CD4-positive, alpha-beta T cell (primary cell): ENCODE measurements at regions of chr22 and their contacts with region 1.

Region 1: DNA sequence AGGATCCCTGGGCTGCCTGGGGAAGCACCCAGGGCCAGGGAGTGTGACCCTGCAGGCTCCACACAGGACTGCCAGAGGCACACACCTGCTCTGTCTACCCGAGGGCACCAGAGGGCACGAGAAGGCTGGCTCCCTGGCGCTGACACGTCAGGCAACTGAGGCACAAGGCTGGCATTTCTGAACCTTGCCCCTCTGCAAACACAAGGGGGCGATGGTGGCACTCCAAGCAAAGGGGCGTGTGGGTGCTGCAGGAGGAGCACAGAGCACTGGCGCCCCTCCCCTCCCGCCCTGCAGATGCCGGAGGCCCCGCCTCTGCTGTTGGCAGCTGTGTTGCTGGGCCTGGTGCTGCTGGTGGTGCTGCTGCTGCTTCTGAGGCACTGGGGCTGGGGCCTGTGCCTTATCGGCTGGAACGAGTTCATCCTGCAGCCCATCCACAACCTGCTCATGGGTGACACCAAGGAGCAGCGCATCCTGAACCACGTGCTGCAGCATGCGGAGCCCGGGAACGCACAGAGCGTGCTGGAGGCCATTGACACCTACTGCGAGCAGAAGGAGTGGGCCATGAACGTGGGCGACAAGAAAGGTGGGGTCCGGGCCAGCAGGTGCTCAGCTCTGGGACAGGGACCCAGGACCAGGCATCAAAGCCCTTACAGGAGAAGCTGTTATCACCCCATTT is 20.8 kb upstream of the TXNRD2 start:
- DNase-seq: peak; percentile 26 to 72 (median 52)
- ATAC-seq: peak; percentile 87
- H3K4me3 ChIP-seq: no peak overlapping the region
- H3K4me3 Mint-ChIP-seq: no peak overlapping the region
- H3K27ac ChIP-seq: no peak overlapping the region
- H3K27ac Mint-ChIP-seq: no peak overlapping the region
- H3K4me1 ChIP-seq: peaks cover 7% of the 10 kb centered on the region
- H3K4me1 Mint-ChIP-seq: no peaks in the 10 kb centered on the region
- H3K27me3 ChIP-seq: no peaks in the 10 kb centered on the region
- H3K27me3 Mint-ChIP-seq: no peaks in the 10 kb centered on the region
- CTCF ChIP-seq: no peak

Region 2: DNA sequence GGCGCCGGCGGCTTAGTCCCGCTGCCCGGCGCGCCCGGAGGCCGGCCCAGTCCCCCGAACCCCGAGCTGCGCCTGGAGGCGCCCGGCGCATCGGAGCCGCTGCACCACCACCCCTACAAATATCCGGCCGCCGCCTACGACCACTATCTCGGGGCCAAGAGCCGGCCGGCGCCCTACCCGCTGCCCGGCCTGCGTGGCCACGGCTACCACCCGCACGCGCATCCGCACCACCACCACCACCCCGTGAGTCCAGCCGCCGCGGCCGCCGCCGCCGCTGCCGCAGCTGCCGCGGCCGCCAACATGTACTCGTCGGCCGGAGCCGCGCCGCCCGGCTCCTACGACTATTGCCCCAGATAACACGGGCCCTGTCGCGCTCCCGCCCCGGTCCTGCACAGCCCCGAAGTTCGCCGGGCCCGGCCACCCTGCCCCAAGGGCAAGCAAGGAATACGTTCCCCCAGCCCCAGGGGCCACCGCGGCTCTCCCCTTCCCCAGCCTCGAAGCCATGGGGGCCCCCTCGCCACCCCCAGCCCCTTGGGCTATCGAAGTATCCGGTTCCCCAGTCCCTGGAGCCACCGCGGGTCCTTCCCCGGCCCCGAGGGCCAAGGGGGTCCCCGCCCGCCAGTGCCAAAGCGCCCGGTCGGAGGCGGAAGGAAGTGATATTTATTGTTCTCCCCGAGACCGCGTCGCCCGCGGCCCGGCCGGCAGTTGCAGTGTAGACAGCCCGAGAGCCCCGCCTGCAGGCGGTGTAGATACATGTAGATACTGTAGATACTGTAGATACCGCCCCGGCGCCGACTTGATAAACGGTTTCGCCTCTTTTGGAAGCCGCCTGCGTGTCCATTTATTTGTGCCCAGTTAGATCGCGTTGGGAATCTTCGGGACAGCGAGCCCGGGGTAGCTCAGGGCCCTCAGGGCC is 195.6 kb before region 1 on chr22:
- CTCF ChIA-PET with region 1: no interaction called
- POLR2A ChIA-PET with region 1: no interaction called
- intact Hi-C with region 1: no loop called
- DNase-seq: peak in 12 of 14 experiments; percentile 12 to 70 (median 38)
- ATAC-seq: peak; percentile 76
- H3K4me3 ChIP-seq: peak overlapping the region; percentile 10
- H3K4me3 Mint-ChIP-seq: peak overlapping the region; percentile 62
- H3K27ac ChIP-seq: no peak overlapping the region
- H3K27ac Mint-ChIP-seq: no peak overlapping the region
- H3K4me1 ChIP-seq: peaks cover 22% of the 10 kb centered on the region
- H3K4me1 Mint-ChIP-seq: peaks cover 13% of the 10 kb centered on the region
- H3K27me3 ChIP-seq: peaks cover 83 to 84% of the 10 kb centered on the region in 2 experiments
- H3K27me3 Mint-ChIP-seq: peaks cover 80% of the 10 kb centered on the region
- CTCF ChIP-seq: no peak

Region 3: GRCh38 chr22:19886601-19887255 is 75.6 kb before region 1 on chr22:
- CTCF ChIA-PET with region 1: no interaction called
- POLR2A ChIA-PET with region 1: no interaction called
- intact Hi-C with region 1: no loop called
- DNase-seq: peak in 13 of 14 experiments; percentile 27 to 76 (median 56)
- ATAC-seq: peak; percentile 60
- H3K4me3 ChIP-seq: no peak overlapping the region
- H3K4me3 Mint-ChIP-seq: peak overlapping the region; percentile 76
- H3K27ac ChIP-seq: peak overlapping the region; percentile 63 to 90
- H3K27ac Mint-ChIP-seq: peak overlapping the region; percentile 97
- H3K4me1 ChIP-seq: peaks cover 88% of the 10 kb centered on the region
- H3K4me1 Mint-ChIP-seq: peaks cover 63% of the 10 kb centered on the region
- H3K27me3 ChIP-seq: no peaks in the 10 kb centered on the region
- H3K27me3 Mint-ChIP-seq: no peaks in the 10 kb centered on the region
- CTCF ChIP-seq: no peak

Region 4: GRCh38 chr22:20279662-20280134 is 317.3 kb after region 1 on chr22:
- CTCF ChIA-PET with region 1: no interaction called
- POLR2A ChIA-PET with region 1: no interaction called
- intact Hi-C with region 1: loop called in 1 of 2 experiments (anchors 10 kb)
- DNase-seq: no peak
- ATAC-seq: no peak
- H3K4me3 ChIP-seq: no peak overlapping the region
- H3K4me3 Mint-ChIP-seq: no peak overlapping the region
- H3K27ac ChIP-seq: no peak overlapping the region
- H3K27ac Mint-ChIP-seq: no peak overlapping the region
- H3K4me1 ChIP-seq: no peaks in the 10 kb centered on the region
- H3K4me1 Mint-ChIP-seq: no peaks in the 10 kb centered on the region
- H3K27me3 ChIP-seq: no peaks in the 10 kb centered on the region
- H3K27me3 Mint-ChIP-seq: no peaks in the 10 kb centered on the region
- CTCF ChIP-seq: no peak